ENCODE measurements at regions of chr3 and their contacts with region 1.

Region 1: DNA sequence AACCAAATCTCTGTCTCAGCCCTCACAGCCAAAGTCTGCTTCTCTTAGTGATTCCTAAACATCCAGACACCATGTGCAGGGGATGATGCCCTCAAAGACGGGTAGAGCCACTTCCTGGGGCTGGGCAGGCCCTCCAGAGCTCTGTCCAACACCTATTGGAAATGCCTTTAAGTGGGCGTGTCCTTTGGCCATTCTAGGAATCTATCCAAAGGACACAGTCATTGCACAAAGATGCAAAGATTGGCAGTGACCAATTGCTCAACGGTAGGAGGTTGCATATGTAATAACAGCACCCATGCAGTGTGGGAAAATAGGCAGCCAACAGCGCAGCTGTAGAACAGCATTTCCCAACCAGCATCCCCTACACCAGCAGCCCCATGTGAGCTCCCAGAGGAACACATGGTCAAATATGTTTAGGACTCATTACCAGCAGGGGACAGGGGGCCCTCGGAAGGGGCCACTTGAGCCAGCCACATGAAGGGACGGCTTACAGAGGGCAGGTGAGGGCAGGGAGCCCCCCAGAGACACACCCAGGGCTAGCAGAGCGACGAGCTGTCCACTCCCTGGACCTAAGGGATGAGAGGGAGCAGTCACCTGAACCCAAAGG is 142.8 kb upstream of the IQSEC1 start:
- DNase-seq: peak; percentile 80 to 95
- H3K4me3 ChIP-seq: no peak overlapping the region
- H3K27ac ChIP-seq: peak overlapping the region; percentile 55
- H3K4me1 ChIP-seq: peaks cover 55% of the 10 kb centered on the region
- H3K27me3 ChIP-seq: no peaks in the 10 kb centered on the region
- CTCF ChIP-seq: no peak

Region 2: DNA sequence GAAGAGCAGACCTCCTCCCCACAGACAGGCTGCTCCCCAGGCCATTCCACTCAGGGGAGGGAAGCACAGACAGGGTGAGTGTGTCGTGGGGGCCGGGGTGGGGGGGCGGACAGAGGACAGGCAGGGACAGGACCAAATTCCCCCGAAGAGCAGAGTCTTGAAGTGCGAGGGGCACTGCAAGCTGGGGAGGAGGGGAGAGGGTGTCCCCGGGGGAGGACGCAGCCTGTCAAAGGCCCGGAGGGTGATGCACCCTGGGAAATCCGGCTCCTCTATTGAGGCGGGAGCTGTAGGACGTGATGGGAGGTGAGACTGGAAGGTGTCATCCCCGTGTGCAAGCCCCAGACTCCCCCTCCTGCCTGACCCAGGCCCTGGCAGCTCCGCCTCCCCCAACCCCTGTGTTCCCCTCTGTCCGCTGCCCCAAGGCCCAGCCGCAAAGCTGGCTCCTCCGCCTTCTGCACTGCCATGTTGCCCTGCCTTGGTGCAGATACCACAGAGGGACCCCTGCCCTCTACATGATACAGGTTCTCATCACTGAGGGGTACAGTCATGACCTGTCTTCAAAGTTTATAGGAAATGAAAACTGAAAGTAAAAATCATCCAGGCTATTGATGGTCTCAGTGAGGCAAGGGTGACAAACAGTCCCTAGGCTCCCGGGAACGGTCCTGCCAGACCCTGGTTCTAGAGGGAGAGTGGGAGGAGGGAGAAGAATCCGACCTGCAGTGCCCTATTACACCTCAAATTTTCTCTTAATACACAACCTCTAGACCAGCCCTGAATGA is 66.5 kb before region 1 on chr3:
- CTCF ChIA-PET with region 1: no interaction called
- POLR2A ChIA-PET with region 1: no interaction called
- intact Hi-C with region 1: loop called (anchors 10 kb)
- DNase-seq: no peak
- H3K4me3 ChIP-seq: no peak overlapping the region
- H3K27ac ChIP-seq: no peak overlapping the region
- H3K4me1 ChIP-seq: no peaks in the 10 kb centered on the region
- H3K27me3 ChIP-seq: no peaks in the 10 kb centered on the region
- CTCF ChIP-seq: no peak

Region 3: DNA sequence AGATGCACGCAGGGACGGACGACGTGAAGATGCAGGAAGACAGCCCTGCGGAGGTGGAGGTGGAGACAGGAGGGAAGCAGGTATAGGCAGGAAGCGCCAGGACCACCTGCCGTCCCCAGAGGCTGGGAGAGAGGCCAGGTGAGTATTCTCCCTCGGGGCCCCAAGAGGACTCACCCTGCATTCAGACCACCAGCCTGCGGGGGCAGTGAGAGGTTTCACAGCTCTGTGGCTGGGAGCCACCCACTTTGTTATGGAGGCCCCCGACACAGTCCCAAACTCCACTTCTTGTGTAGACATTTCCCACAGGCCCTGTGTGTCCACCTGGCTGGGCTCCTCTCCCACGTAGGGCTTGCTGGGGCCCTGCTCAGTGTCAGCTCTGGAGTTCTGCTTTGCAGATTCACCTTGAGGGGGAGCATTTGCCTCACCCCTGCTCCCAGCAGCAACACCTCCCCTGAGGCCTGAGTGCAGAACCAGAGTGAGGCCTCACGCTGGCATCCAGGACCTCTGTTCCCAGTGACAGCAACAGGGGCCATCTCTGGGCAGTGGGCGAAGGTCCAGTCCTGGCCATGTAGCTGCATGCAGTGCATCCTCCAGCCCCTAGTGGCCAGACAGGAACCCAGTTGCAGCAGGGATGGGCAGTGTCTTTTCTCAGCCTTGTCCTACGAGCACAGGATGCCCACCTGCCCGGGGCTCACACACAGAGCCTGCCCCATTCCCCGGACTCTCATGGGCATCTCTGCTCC is 23.4 kb before region 1 on chr3:
- CTCF ChIA-PET with region 1: no interaction called
- POLR2A ChIA-PET with region 1: interaction called, 3 read pairs
- intact Hi-C with region 1: loop called (anchors 1 kb)
- DNase-seq: no peak
- H3K4me3 ChIP-seq: no peak overlapping the region
- H3K27ac ChIP-seq: no peak overlapping the region
- H3K4me1 ChIP-seq: peaks cover 56% of the 10 kb centered on the region
- H3K27me3 ChIP-seq: no peaks in the 10 kb centered on the region
- CTCF ChIP-seq: peak; percentile 68

Measured in PC-9 (cell line).